Gastrocnemius medialis (tissue), 4 donors: ENCODE measurements at regions of chr17 and their contacts with region 1.

Region 1: GRCh38 chr17:17141860-17142552 is 64.1 kb downstream of the PLD6 start:
- DNase-seq: no peak
- ATAC-seq: peak in 1 of 2 donors; percentile 41
- H3K4me3 ChIP-seq: no peak overlapping the region
- H3K27ac ChIP-seq: peak overlapping the region in 2 of 4 donors; percentile 21 to 45
- H3K4me1 ChIP-seq: peaks cover 19 to 27% of the 10 kb centered on the region in 2 donors
- H3K27me3 ChIP-seq: no peaks in the 10 kb centered on the region
- CTCF ChIP-seq: peak; percentile 70 to 83 (median 81)
- POLR2A ChIP-seq: no peak

Region 2: DNA sequence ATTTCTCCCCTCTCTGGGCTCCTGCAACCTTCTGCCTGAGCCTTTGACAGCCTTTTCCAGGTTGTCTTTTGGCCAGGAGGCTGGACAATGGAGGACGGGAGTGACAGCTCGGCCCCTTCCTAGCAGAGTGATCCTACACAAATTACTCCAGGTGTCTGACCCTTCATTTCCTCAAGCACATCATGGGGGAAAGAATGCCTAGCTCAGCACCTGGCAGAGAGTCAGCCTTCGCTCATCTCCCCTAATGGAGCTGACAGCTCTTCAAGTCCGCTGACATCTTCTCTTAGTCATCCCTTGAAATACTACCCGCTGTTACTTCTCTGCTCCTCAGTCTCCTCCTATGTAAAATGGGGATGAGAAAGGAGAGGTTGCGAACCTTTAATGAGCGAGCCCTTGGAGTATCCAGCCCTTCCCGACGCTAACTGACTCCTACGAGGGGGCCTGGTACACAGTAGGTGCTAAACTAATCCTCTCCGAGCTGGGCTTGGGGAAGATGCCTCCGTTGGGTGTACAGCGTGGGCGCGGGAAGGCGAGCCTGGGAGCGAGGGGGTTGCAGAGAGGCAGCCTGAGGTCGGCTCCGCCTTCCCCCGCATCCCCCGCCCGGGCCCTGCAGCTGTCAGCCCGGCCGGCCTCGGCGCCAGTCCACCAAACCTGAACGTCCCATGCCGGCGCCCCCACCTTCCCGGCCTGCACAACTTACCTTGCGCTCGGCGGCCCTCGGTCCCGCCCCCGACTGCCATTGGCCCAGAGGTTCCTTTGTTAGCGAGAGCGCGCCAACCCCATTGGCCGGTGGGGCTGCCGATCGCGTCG is 100.2 kb before region 1 on chr17:
- in situ Hi-C with region 1: loop called in 1 of 4 experiments (anchors 25 kb)
- intact Hi-C with region 1: no loop called
- DNase-seq: peak; percentile 97 to 99
- ATAC-seq: peak; percentile 69 to 78
- H3K4me3 ChIP-seq: peak overlapping the region; percentile 42 to 66 (median 62)
- H3K27ac ChIP-seq: peak overlapping the region; percentile 87 to 99 (median 94)
- H3K4me1 ChIP-seq: peaks cover 52 to 58% of the 10 kb centered on the region in 2 donors
- H3K27me3 ChIP-seq: no peaks in the 10 kb centered on the region
- CTCF ChIP-seq: no peak
- POLR2A ChIP-seq: peak; percentile 45 to 69